Naive thymus-derived CD4-positive, alpha-beta T cell (primary cell): ENCODE measurements at regions of chrX and their contacts with region 1.

Region 1: GRCh38 chrX:40201329-40201885 is 103.6 kb upstream of the BCOR start:
- DNase-seq: peak in 2 of 9 donors; percentile 13 to 15
- ATAC-seq: peak; percentile 80
- H3K4me3 ChIP-seq: no peak overlapping the region
- H3K4me3 Mint-ChIP-seq: peak overlapping the region in 1 of 10 donors; percentile 67
- H3K27ac ChIP-seq: no peak overlapping the region
- H3K27ac Mint-ChIP-seq: peak overlapping the region in 2 of 9 donors; percentile 25 to 90
- H3K4me1 ChIP-seq: peaks cover 2 to 5% of the 10 kb centered on the region in 2 donors
- H3K4me1 Mint-ChIP-seq: peaks cover 0 to 22% (median 13%) of the 10 kb centered on the region in 7 donors
- H3K27me3 ChIP-seq: no peaks in the 10 kb centered on the region
- H3K27me3 Mint-ChIP-seq: no peaks in the 10 kb centered on the region

Region 2: DNA sequence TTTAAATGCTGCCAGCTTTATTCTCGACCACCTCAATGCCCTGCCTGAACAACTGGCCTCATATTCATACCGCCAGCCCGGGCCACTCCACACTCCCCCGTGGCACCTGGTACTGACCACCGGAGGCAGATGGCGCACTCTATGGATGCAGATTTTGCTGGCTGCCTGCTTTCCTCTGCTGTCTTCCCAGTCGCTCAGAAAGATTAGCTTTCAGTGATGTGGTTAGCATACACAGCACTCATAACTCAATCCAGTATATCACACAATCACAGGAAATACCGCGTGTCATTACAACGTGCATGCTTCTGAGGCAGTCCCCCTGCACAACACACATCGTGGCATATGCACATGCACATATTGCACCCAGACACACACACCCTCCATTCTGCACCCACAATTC is 43.6 kb after region 1 on chrX:
- CTCF ChIA-PET with region 1: no interaction called
- POLR2A ChIA-PET with region 1: no interaction called
- intact Hi-C with region 1: loop called in 1 of 2 experiments (anchors 1 kb)
- DNase-seq: peak in 6 of 9 donors; percentile 9 to 37 (median 19)
- ATAC-seq: peak; percentile 45
- H3K4me3 ChIP-seq: no peak overlapping the region
- H3K4me3 Mint-ChIP-seq: peak overlapping the region; percentile 3 to 75 (median 26)
- H3K27ac ChIP-seq: no peak overlapping the region
- H3K27ac Mint-ChIP-seq: peak overlapping the region in 1 of 9 donors; percentile 21
- H3K4me1 ChIP-seq: peaks cover 0 to 13% of the 10 kb centered on the region in 2 donors
- H3K4me1 Mint-ChIP-seq: peaks cover 6 to 14% (median 13%) of the 10 kb centered on the region in 7 donors
- H3K27me3 ChIP-seq: no peaks in the 10 kb centered on the region
- H3K27me3 Mint-ChIP-seq: peaks cover 0 to 6% (median 2%) of the 10 kb centered on the region in 5 donors